ENCODE measurements at regions of chr19 and their contacts with region 1.

Region 1: GRCh38 chr19:31356587-31357314 is 7.5 kb upstream of the TSHZ3 start:
- DNase-seq: no peak
- H3K4me3 Mint-ChIP-seq: no peak overlapping the region
- H3K27ac Mint-ChIP-seq: peak overlapping the region; percentile 42
- H3K4me1 Mint-ChIP-seq: peaks cover 17% of the 10 kb centered on the region
- H3K27me3 Mint-ChIP-seq: peaks cover 62% of the 10 kb centered on the region

Region 2: GRCh38 chr19:30784850-30785457 is 571.8 kb before region 1 on chr19:
- intact Hi-C with region 1: loop called (anchors 1 kb)
- DNase-seq: peak; percentile 29
- H3K4me3 Mint-ChIP-seq: no peak overlapping the region
- H3K27ac Mint-ChIP-seq: no peak overlapping the region
- H3K4me1 Mint-ChIP-seq: peaks cover 2% of the 10 kb centered on the region
- H3K27me3 Mint-ChIP-seq: no peaks in the 10 kb centered on the region

Region 3: DNA sequence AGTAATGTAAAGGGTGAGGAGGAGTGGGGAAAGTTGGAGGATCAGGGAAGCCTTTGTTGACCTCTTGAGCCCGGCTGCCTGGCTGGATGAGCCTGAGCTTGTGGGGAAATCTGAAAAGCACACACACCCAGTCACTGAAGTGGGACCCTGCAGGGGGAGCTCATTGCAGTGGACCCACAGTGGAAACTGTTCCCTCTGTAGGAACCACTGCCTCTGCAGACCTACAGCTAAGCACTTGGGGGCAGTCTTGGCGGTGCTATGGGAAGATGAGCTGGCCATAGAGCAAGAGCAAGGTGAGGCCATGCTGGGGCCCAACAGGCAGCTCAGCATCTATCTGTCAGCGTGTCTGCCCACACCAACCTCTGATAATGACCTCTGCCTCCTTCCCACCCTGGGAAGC is 302.3 kb before region 1 on chr19:
- intact Hi-C with region 1: loop called (anchors 2 kb)
- DNase-seq: no peak
- H3K4me3 Mint-ChIP-seq: no peak overlapping the region
- H3K27ac Mint-ChIP-seq: no peak overlapping the region
- H3K4me1 Mint-ChIP-seq: no peaks in the 10 kb centered on the region
- H3K27me3 Mint-ChIP-seq: no peaks in the 10 kb centered on the region

Region 4: GRCh38 chr19:31214086-31214485 is 142.7 kb before region 1 on chr19:
- intact Hi-C with region 1: loop called (anchors 5 kb)
- DNase-seq: peak; percentile 89
- H3K4me3 Mint-ChIP-seq: peak overlapping the region; percentile 72
- H3K27ac Mint-ChIP-seq: peak overlapping the region; percentile 96
- H3K4me1 Mint-ChIP-seq: peaks cover 28% of the 10 kb centered on the region
- H3K27me3 Mint-ChIP-seq: no peaks in the 10 kb centered on the region

Region 5: GRCh38 chr19:32224371-32225244 is 867.9 kb after region 1 on chr19:
- intact Hi-C with region 1: loop called (anchors 5 kb)
- DNase-seq: peak; percentile 26
- H3K4me3 Mint-ChIP-seq: peak overlapping the region; percentile 64
- H3K27ac Mint-ChIP-seq: no peak overlapping the region
- H3K4me1 Mint-ChIP-seq: peaks cover 5% of the 10 kb centered on the region
- H3K27me3 Mint-ChIP-seq: peaks cover 22% of the 10 kb centered on the region

Measured in activated T-helper 2 cell treated with anti-CD3 and anti-CD28 coated beads, Interferon-gamma antibody, Interleukin-2, Interleukin-4, amounts not matched to agents 10 μg/mL and 5 μg/mL and 100 μg/mL, durations not matched to agents 14 hours and 24 hours and 36 hours (primary cell).